ENCODE measurements at regions of chr20 and their contacts with region 1.

Region 1: GRCh38 chr20:4026093-4026601 is 10.8 kb upstream of the RNF24 start:
- DNase-seq: peak; percentile 75
- ATAC-seq: peak; percentile 82
- H3K4me3 ChIP-seq: no peak overlapping the region
- H3K27ac ChIP-seq: peak overlapping the region; percentile 39
- H3K4me1 ChIP-seq: peaks cover 31% of the 10 kb centered on the region
- H3K27me3 ChIP-seq: no peaks in the 10 kb centered on the region
- CTCF ChIP-seq: peak; percentile 58

Region 2: DNA sequence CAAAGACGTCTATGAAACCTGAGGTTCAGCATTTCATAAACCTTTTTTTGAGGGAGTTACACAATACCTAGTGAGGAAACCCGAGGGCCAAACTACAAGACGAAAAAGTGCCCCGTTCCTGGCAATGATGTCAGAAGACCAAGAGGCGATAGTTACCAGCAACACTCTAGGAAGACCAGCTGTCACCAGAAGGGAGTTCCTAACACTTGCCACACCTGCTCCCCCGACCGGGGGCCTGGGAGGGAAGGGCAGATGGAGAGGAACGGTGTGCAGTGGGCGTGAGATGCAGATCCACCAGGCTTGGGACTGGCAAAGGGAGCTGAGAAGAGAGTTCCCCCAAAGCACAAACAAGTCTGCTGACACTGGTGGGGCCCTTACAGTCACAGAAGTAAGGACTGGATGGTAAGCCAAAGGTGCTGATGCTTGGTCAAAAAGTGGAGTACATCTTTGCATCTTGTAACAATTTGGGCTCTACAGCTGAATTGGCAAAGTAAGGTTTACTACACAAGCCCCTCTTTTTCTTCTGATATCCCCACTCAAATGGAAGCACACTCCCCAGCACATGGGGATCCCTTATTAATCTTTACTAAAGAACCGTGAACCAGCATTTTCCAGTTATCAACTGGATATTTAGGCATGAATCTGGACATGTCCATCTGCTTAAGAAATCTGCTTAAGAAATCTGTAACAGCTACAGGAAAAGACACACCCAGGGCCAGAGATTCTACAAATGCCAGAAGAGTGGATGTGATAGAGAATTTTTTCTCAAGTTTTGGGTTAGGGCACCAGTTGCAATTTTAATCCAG is 98.5 kb before region 1 on chr20:
- CTCF ChIA-PET with region 1: no interaction called
- POLR2A ChIA-PET with region 1: no interaction called
- intact Hi-C with region 1: no loop called
- DNase-seq: no peak
- ATAC-seq: no peak
- H3K4me3 ChIP-seq: no peak overlapping the region
- H3K27ac ChIP-seq: no peak overlapping the region
- H3K4me1 ChIP-seq: peaks cover 4% of the 10 kb centered on the region; the same call in 1 of the 2 replicates
- H3K27me3 ChIP-seq: no peaks in the 10 kb centered on the region
- CTCF ChIP-seq: no peak

Region 3: DNA sequence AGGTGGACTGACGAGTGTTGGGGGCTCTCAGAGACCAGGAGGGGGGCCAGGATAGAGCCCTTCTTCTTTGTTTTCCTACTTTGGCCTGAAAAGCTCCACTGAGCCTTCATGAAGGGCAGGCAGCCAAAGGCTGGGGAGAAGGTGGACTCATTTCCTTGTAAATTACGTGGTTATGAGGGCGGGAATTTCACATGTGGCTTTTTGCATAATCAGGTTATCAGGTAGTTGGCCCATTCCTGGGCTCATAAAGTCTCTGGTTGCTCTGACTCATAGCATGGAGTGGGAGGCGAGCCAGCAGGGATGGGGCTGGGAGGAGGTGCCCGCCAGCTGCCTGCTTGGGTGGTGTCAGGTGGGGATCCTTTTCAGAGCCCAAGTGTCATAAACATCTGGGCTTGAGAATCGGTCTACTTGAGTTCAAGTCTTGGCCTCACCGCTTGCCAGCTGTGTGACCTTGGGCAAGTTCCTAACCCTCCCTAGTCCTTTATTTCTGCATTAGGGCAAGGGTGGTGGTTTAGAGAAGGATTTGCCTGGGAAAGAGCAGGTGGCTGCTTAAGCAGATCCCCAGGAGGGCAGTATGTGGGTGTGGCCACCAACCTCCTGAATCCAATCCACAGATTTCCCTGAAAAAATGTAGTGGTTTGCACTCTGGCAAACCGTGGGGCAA is 15.7 kb after region 1 on chr20:
- CTCF ChIA-PET with region 1: interaction called, 5 read pairs
- POLR2A ChIA-PET with region 1: no interaction called
- intact Hi-C with region 1: loop called (anchors 1 kb)
- DNase-seq: peak; percentile 100
- ATAC-seq: peak; percentile 81
- H3K4me3 ChIP-seq: no peak overlapping the region; the same call in 1 of the 2 replicates
- H3K27ac ChIP-seq: peak overlapping the region; percentile 49
- H3K4me1 ChIP-seq: peaks cover 53% of the 10 kb centered on the region
- H3K27me3 ChIP-seq: no peaks in the 10 kb centered on the region
- CTCF ChIP-seq: no peak

Region 4: DNA sequence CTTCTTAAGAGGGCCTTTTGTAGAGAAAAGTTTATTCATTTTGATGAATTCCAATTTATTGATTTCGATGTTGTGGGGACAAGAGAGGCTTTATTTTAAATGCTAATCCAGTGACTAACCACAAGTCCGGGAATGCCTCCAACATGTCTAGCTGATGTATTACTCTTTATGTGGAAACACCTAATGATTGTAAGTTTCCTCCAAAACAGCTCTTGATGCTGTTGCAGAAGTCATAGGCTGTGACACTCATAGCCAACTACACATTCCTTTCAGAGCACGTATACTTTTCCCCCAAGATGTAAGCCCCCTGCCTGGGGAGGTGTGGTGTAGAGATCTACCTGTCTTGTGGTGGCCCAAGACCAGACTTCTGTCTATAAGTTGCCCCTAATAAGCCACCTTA is 50.5 kb after region 1 on chr20:
- CTCF ChIA-PET with region 1: interaction called, 7 read pairs
- POLR2A ChIA-PET with region 1: interaction called, 11 read pairs
- intact Hi-C with region 1: no loop called
- DNase-seq: peak; percentile 90
- ATAC-seq: peak; percentile 88
- H3K4me3 ChIP-seq: no peak overlapping the region
- H3K27ac ChIP-seq: peak overlapping the region; percentile 21; the same call in 1 of the 2 replicates
- H3K4me1 ChIP-seq: peaks cover 12% of the 10 kb centered on the region
- H3K27me3 ChIP-seq: no peaks in the 10 kb centered on the region
- CTCF ChIP-seq: no peak